Transverse colon (tissue), 4 donors: ENCODE measurements at regions of chr12 and their contacts with region 1.

Region 1: GRCh38 chr12:12716793-12717585 is at the start of gene CDKN1B:
- DNase-seq: peak; percentile 94
- H3K4me3 ChIP-seq: peak within 1 kb of the TSS; percentile 92 to 99 (median 97)
- H3K27ac ChIP-seq: peak within 1 kb of the TSS; percentile 99 to 100 (median 100)
- H3K4me1 ChIP-seq: peaks cover 28 to 59% (median 56%) of the 10 kb centered on the region in 4 donors
- H3K27me3 ChIP-seq: no peaks in the 10 kb centered on the region
- CTCF ChIP-seq: no peak
- EP300 ChIP-seq: no peak
- POLR2A ChIP-seq: peak; percentile 95
- total RNA-seq, gene CDKN1B: 14.1 to 58.3 (median 54.1) TPM

Region 2: DNA sequence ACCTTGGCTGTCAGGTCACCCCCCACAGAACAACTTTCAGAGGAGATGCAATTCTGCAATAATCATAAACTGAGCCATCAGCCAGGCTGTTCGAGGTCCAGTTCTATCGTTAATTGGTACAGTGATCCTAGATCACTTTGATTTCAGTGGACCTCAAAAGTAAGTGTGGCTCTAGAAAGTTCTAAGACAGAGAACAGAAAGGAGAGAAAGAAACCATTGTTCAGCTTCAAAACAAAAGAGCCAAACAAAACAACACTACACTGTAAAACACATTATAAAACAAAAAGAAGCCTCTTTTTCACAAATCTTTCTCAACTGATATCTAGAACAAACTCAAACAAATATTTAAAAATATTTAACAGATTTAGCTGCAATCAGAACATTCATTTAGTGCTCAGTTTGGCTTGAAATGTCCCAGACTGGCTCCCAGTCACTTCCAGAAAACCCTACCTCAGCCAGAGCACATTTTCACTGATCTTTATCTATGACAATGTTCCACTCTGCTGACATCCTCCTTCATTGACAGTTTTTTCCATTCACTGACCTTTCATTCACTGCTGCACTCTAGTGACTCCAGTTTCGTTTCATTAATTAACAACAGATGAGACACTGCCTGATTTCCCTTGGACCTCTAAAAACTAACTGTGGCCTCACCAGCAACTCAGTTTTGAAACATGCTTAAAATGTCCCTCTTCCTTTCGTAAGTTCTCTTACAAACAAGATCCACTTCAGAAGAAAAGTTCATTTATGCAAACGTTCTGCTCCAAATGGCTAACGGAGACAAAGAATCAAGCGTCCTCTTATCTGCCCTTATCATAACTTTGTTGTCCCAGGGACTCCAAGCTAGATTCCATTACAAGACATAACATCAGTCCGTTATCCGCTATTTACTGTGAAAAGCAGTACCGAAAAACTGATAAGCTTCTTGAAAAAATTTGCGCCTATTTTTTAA is 211.2 kb before region 1 on chr12:
- in situ Hi-C with region 1: no loop called
- intact Hi-C with region 1: no loop called
- DNase-seq: no peak
- H3K4me3 ChIP-seq: no peak overlapping the region
- H3K27ac ChIP-seq: peak overlapping the region; percentile 52 to 65 (median 60)
- H3K4me1 ChIP-seq: peaks cover 5 to 24% (median 9%) of the 10 kb centered on the region in 4 donors
- H3K27me3 ChIP-seq: no peaks in the 10 kb centered on the region
- CTCF ChIP-seq: no peak
- EP300 ChIP-seq: no peak
- POLR2A ChIP-seq: no peak

Region 3: DNA sequence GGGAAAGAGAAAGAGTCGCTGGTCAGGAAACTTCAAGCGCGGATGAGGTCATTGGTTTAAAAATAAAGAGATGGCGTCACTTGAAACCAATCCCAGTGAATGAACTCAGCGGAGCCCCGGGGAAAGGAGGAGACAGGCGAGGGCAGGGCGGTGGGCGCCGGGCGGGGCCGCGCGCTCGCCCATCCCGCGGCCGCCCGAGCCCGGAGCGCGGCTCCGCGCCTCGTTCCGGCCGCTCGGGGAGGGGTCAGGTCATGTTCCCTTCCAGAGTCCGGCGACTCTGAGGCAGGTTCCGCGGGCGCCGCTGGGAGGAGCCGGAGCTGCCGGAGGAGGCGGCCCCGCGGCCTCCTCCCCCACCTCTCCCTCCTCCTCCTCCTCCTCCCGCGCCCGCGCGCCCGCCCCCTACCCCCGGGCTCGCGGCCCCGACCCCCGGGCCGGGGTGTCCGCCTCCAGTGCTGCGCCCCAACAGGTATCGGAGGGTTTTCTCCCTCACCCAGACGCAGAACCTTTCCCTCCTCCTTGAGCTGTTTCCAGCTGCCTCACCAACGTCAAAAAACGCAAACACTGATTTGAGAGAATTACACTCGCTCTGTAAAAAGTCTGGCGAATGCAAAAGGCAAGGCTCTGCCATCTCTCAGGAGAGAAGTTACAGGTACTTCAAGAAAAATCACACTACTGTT is 154.3 kb before region 1 on chr12 and contains the start of gene DUSP16:
- in situ Hi-C with region 1: no loop called
- intact Hi-C with region 1: loop called (anchors 5 kb)
- DNase-seq: peak; percentile 92
- H3K4me3 ChIP-seq: peak within 1 kb of the TSS; percentile 76 to 93 (median 88)
- H3K27ac ChIP-seq: peak within 1 kb of the TSS; percentile 99 to 100 (median 100)
- H3K4me1 ChIP-seq: peaks cover 0 to 45% (median 32%) of the 10 kb centered on the region in 4 donors
- H3K27me3 ChIP-seq: no peaks in the 10 kb centered on the region
- CTCF ChIP-seq: peak in 2 of 5 experiments; percentile 15 to 21
- EP300 ChIP-seq: no peak
- POLR2A ChIP-seq: peak; percentile 49
- total RNA-seq, gene DUSP16: 16.1 to 47.0 (median 40.0) TPM

Region 4: DNA sequence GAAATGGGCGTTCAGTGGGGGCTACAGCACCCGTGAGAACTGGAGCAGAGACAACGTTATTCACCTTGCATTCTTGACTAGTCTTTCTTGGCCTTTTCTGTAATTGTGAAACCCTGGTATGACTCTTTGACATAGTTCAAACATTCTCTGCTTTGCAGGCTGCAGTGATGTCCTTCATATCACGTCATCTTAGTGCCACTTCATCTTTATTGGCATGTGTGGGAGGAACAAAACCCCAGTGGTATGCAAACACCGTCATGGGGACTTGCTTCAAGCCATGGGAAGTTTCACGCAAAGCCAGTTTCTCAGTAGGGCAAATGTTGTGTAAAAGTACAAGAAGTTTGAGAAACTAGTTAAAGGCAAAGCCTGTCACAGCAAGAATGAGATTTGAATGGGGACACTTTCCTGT is 134.1 kb before region 1 on chr12:
- in situ Hi-C with region 1: no loop called
- intact Hi-C with region 1: no loop called
- DNase-seq: no peak
- H3K4me3 ChIP-seq: no peak overlapping the region
- H3K27ac ChIP-seq: peak overlapping the region; percentile 34 to 57 (median 46)
- H3K4me1 ChIP-seq: peaks cover 0 to 60% (median 13%) of the 10 kb centered on the region in 4 donors
- H3K27me3 ChIP-seq: no peaks in the 10 kb centered on the region
- CTCF ChIP-seq: no peak
- EP300 ChIP-seq: no peak
- POLR2A ChIP-seq: no peak